IMR-90 (cell line): ENCODE measurements at regions of chr14 and their contacts with region 1.

Region 1: GRCh38 chr14:40666780-40667179 is 939.9 kb upstream of the LRFN5 start:
- DNase-seq: no peak
- ATAC-seq: no peak
- H3K4me3 ChIP-seq: no peak overlapping the region
- H3K27ac ChIP-seq: no peak overlapping the region
- H3K4me1 ChIP-seq: no peaks in the 10 kb centered on the region
- H3K27me3 ChIP-seq: no peaks in the 10 kb centered on the region
- CTCF ChIP-seq: no peak
- POLR2A ChIP-seq: no peak
- RAD21 ChIP-seq: no peak

Region 2: GRCh38 chr14:40656311-40656710 is 10.5 kb before region 1 on chr14:
- CTCF ChIA-PET with region 1: no interaction called
- POLR2A ChIA-PET with region 1: no interaction called
- dilution Hi-C with region 1: no loop called
- in situ Hi-C with region 1: no loop called
- intact Hi-C with region 1: loop called (anchors 1 kb)
- DNase-seq: no peak
- ATAC-seq: no peak
- H3K4me3 ChIP-seq: no peak overlapping the region
- H3K27ac ChIP-seq: no peak overlapping the region
- H3K4me1 ChIP-seq: no peaks in the 10 kb centered on the region
- H3K27me3 ChIP-seq: no peaks in the 10 kb centered on the region
- CTCF ChIP-seq: no peak
- POLR2A ChIP-seq: no peak
- RAD21 ChIP-seq: no peak